Activated CD8-positive, alpha-beta T cell treated with anti-CD3 and anti-CD28 coated beads for 36 hours (primary cell): ENCODE measurements at regions of chr3 and their contacts with region 1.

Region 1: GRCh38 chr3:38136777-38137614 is at the start of gene ACAA1:
- DNase-seq: peak; percentile 100
- ATAC-seq: peak; percentile 92
- H3K4me3 Mint-ChIP-seq: peak within 1 kb of the TSS; percentile 92
- H3K27ac Mint-ChIP-seq: peak within 1 kb of the TSS; percentile 98
- H3K4me1 Mint-ChIP-seq: peaks cover 59% of the 10 kb centered on the region
- H3K27me3 Mint-ChIP-seq: no peaks in the 10 kb centered on the region
- CTCF ChIP-seq: no peak
- total RNA-seq, gene ACAA1: 70.1 to 72.0 TPM

Region 2: GRCh38 chr3:38154033-38154494 is 17.1 kb after region 1 on chr3:
- CTCF ChIA-PET with region 1: interaction called, 3 read pairs
- POLR2A ChIA-PET with region 1: interaction called, 16 read pairs
- intact Hi-C with region 1: no loop called
- DNase-seq: no peak
- ATAC-seq: no peak
- H3K4me3 Mint-ChIP-seq: no peak overlapping the region
- H3K27ac Mint-ChIP-seq: peak overlapping the region; percentile 74
- H3K4me1 Mint-ChIP-seq: peaks cover 45% of the 10 kb centered on the region
- H3K27me3 Mint-ChIP-seq: no peaks in the 10 kb centered on the region
- CTCF ChIP-seq: no peak